MCF 10A (cell line): ENCODE measurements at regions of chr3 and their contacts with region 1.

Region 1: GRCh38 chr3:8095724-8096123 is 405.9 kb upstream of the LMCD1 start:
- DNase-seq: no peak
- H3K4me3 Mint-ChIP-seq: no peak overlapping the region
- H3K27ac Mint-ChIP-seq: no peak overlapping the region
- H3K4me1 Mint-ChIP-seq: peaks cover 7% of the 10 kb centered on the region
- H3K27me3 Mint-ChIP-seq: no peaks in the 10 kb centered on the region
- CTCF ChIP-seq: no peak

Region 2: DNA sequence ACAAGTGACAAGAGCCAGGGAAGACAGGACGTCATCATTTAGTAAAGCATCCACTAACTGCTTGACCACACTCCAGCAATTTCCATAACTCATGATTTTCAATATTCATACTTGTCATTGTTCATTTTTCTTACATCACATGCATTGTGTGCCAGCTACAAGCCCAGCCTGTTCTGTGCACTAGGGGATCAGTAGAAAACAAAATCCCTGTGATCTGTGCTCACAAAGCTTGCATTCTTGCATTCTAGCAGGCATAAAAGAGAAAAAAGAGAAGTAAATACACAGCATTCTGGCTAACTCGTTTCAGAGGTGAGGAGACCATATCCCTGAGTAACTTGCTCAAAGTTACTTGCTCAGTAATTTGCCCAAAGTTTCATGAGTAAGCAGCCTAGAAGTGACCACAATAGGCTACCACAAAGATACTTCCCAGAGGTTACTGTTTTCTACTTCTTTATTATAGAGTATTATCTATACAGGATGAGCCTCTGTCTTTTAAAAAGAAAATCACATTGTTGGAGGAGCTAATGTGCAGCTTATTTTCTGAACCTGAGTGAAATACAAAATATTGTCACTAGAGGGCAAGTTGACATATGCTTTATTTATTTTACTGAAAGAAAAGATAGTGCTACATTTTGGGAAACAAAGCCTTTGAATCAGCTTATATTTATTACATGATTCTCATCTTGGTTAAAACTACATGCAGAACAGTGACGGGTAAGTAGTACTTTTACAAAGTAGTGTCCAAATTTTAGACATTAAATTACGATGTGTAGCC is 295.5 kb before region 1 on chr3:
- CTCF ChIA-PET with region 1: interaction called, 4 read pairs
- POLR2A ChIA-PET with region 1: no interaction called
- intact Hi-C with region 1: loop called (anchors 5 kb)
- DNase-seq: peak; percentile 4
- H3K4me3 Mint-ChIP-seq: no peak overlapping the region
- H3K27ac Mint-ChIP-seq: peak overlapping the region; percentile 35
- H3K4me1 Mint-ChIP-seq: peaks cover 7% of the 10 kb centered on the region
- H3K27me3 Mint-ChIP-seq: no peaks in the 10 kb centered on the region
- CTCF ChIP-seq: peak; percentile 37

Region 3: DNA sequence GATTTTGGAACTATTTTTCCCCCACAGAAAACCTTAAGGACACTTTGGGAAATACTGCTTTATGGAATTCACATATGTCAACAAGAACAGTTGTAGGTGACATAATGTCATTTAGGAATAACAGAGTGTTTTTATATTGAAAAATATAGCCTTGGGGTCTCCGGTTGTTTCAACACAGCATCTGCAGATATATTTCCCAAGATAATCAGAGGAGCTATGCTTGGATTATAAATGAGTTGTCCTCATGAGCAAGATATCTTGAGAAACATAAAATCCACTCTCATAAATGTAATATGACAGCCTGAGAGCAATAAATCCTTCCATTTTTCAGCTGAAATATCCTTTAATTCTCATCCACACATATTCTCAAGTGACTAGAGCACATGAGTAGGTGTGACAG is 67.8 kb before region 1 on chr3:
- CTCF ChIA-PET with region 1: no interaction called
- POLR2A ChIA-PET with region 1: no interaction called
- intact Hi-C with region 1: no loop called
- DNase-seq: no peak
- H3K4me3 Mint-ChIP-seq: no peak overlapping the region
- H3K27ac Mint-ChIP-seq: no peak overlapping the region
- H3K4me1 Mint-ChIP-seq: no peaks in the 10 kb centered on the region
- H3K27me3 Mint-ChIP-seq: no peaks in the 10 kb centered on the region
- CTCF ChIP-seq: no peak

Region 4: DNA sequence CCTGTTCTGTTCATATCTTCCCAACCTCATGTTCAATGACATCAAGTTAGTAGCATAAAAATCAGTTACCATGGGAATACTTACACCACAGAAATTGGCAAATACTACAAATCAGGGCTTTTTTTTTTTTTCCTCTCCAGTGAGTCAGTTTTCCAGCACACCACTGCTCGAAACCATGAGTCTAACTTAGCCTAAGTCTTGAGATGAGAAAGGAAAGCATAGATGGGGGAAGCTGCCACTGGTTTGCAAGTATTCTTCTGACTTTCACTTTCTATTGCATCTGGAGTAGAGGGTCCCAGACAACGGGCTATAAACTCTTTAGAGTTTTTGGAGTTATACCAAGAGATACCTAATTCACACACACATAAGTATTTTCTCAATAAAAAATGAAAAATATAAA is 10.2 kb before region 1 on chr3:
- CTCF ChIA-PET with region 1: no interaction called
- POLR2A ChIA-PET with region 1: no interaction called
- intact Hi-C with region 1: no loop called
- DNase-seq: no peak
- H3K4me3 Mint-ChIP-seq: no peak overlapping the region
- H3K27ac Mint-ChIP-seq: no peak overlapping the region
- H3K4me1 Mint-ChIP-seq: no peaks in the 10 kb centered on the region
- H3K27me3 Mint-ChIP-seq: no peaks in the 10 kb centered on the region
- CTCF ChIP-seq: no peak

Region 5: GRCh38 chr3:8899986-8900385 is 804.3 kb after region 1 on chr3:
- CTCF ChIA-PET with region 1: no interaction called
- POLR2A ChIA-PET with region 1: no interaction called
- intact Hi-C with region 1: no loop called
- DNase-seq: peak; percentile 0
- H3K4me3 Mint-ChIP-seq: no peak overlapping the region
- H3K27ac Mint-ChIP-seq: no peak overlapping the region
- H3K4me1 Mint-ChIP-seq: no peaks in the 10 kb centered on the region
- H3K27me3 Mint-ChIP-seq: no peaks in the 10 kb centered on the region
- CTCF ChIP-seq: no peak